ENCODE measurements at regions of chr14 and their contacts with region 1.

Region 1: GRCh38 chr14:101758913-101759593 is 2.5 kb upstream of the PPP2R5C start:
- DNase-seq: no peak
- H3K4me3 ChIP-seq: no peak overlapping the region
- H3K27ac ChIP-seq: no peak overlapping the region
- H3K4me1 ChIP-seq: peaks cover 9 to 16% of the 10 kb centered on the region in 2 donors
- H3K27me3 ChIP-seq: no peaks in the 10 kb centered on the region
- CTCF ChIP-seq: no peak
- POLR2A ChIP-seq: no peak

Region 2: GRCh38 chr14:101707068-101707842 is 51.8 kb before region 1 on chr14:
- intact Hi-C with region 1: loop called (anchors 5 kb)
- DNase-seq: peak; percentile 46 to 57
- H3K4me3 ChIP-seq: no peak overlapping the region
- H3K27ac ChIP-seq: peak overlapping the region in 2 of 3 donors; percentile 55 to 63
- H3K4me1 ChIP-seq: peaks cover 9 to 50% of the 10 kb centered on the region in 2 donors
- H3K27me3 ChIP-seq: no peaks in the 10 kb centered on the region
- CTCF ChIP-seq: peak; percentile 70 to 91 (median 78)
- POLR2A ChIP-seq: no peak

Region 3: GRCh38 chr14:102304611-102305509 is 545.8 kb after region 1 on chr14 and contains the start of gene MOK:
- intact Hi-C with region 1: no loop called
- DNase-seq: peak; percentile 92 to 95
- H3K4me3 ChIP-seq: peak within 1 kb of the TSS; percentile 29 to 87 (median 74)
- H3K27ac ChIP-seq: peak within 1 kb of the TSS; percentile 31 to 46 (median 37)
- H3K4me1 ChIP-seq: no peaks in the 10 kb centered on the region
- H3K27me3 ChIP-seq: no peaks in the 10 kb centered on the region
- CTCF ChIP-seq: no peak
- POLR2A ChIP-seq: peak in 1 of 2 donors; percentile 64
- total RNA-seq, gene MOK: 38.6 to 57.7 (median 45.2) TPM

Region 4: DNA sequence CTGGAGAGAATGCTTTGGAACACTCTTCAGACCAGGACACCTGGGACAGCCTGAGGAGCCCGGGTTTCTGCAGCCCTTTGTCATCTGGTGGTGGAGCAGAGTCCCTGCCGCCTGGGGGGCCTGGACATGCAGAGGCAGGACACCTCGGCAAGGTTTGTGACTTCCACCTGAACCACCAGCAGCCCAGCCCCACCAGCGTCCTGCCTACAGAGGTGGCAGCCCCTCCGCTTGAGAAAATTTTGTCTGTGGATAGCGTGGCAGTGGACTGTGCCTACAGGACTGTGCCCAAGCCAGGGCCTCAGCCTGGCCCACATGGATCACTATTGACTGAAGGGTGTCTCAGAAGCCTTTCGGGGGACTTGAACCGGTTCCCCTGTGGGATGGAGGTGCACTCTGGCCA is 582.5 kb after region 1 on chr14:
- intact Hi-C with region 1: no loop called
- DNase-seq: no peak
- H3K4me3 ChIP-seq: no peak overlapping the region
- H3K27ac ChIP-seq: no peak overlapping the region
- H3K4me1 ChIP-seq: no peaks in the 10 kb centered on the region
- H3K27me3 ChIP-seq: no peaks in the 10 kb centered on the region
- CTCF ChIP-seq: no peak
- POLR2A ChIP-seq: no peak

Measured in thyroid gland (tissue), 4 donors.